Activated B cell treated with CpG ODN at 0.5 μM for 24 hours (primary cell): ENCODE measurements at regions of chr6 and their contacts with region 1.

Region 1: GRCh38 chr6:88492824-88493223 is 326.7 kb upstream of the CNR1 start:
- DNase-seq: no peak
- ATAC-seq: no peak
- H3K4me3 Mint-ChIP-seq: no peak overlapping the region
- H3K27ac Mint-ChIP-seq: no peak overlapping the region
- H3K4me1 Mint-ChIP-seq: peaks cover 25% of the 10 kb centered on the region
- H3K27me3 Mint-ChIP-seq: no peaks in the 10 kb centered on the region
- CTCF ChIP-seq: no peak

Region 2: DNA sequence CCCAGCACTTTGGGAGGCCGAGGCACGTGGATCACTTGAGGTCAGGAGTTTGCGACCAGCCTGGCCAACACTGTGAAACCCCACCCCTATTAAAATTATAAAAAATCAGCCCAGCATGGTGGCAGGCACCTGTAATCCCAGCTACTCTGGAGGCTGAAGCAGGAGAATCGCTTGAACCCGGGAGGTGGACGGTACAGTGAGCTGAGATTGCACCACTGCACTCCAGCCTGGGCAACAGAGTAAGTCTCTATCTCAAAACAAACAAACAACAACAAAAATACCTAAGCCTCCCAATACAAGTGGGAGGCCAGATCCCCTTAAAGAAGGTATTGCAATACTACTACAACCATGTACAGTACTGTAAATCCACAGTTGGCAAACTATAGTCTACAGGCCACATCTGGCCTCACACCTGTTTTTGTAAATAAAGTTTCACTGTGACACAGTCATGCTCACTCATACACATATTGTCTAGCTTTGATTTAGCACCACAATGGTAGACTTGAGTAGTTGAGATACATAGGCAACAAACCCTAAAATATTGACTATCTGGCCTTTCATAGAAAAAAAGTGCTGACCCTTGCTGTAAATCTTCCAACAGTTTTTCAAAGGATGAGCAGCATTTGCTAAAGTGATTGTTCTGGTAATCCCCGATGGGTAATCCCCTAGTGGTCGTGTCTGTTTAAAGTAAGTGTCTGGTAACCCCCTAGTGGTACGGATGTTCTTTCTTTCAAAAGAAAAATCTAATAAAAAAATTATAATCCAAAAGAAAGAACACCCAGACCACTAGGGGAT is 268.6 kb after region 1 on chr6:
- CTCF ChIA-PET with region 1: no interaction called
- POLR2A ChIA-PET with region 1: no interaction called
- intact Hi-C with region 1: loop called (anchors 5 kb)
- DNase-seq: no peak
- ATAC-seq: peak; percentile 84
- H3K4me3 Mint-ChIP-seq: peak overlapping the region; percentile 19
- H3K27ac Mint-ChIP-seq: peak overlapping the region; percentile 75
- H3K4me1 Mint-ChIP-seq: peaks cover 33% of the 10 kb centered on the region
- H3K27me3 Mint-ChIP-seq: no peaks in the 10 kb centered on the region
- CTCF ChIP-seq: no peak

Region 3: GRCh38 chr6:89689732-89690131 is 1196.9 kb after region 1 on chr6:
- CTCF ChIA-PET with region 1: no interaction called
- POLR2A ChIA-PET with region 1: no interaction called
- intact Hi-C with region 1: no loop called
- DNase-seq: no peak
- ATAC-seq: no peak
- H3K4me3 Mint-ChIP-seq: no peak overlapping the region
- H3K27ac Mint-ChIP-seq: no peak overlapping the region
- H3K4me1 Mint-ChIP-seq: peaks cover 12% of the 10 kb centered on the region
- H3K27me3 Mint-ChIP-seq: no peaks in the 10 kb centered on the region
- CTCF ChIP-seq: no peak